PC-9 (cell line): ENCODE measurements at regions of chr5 and their contacts with region 1.

Region 1: GRCh38 chr5:20300110-20300509 is 312.1 kb upstream of the CDH18 start:
- DNase-seq: no peak
- H3K4me3 ChIP-seq: no peak overlapping the region
- H3K27ac ChIP-seq: no peak overlapping the region
- H3K4me1 ChIP-seq: no peaks in the 10 kb centered on the region
- H3K27me3 ChIP-seq: no peaks in the 10 kb centered on the region
- CTCF ChIP-seq: no peak

Region 2: GRCh38 chr5:18975624-18976023 is 1324.5 kb before region 1 on chr5:
- CTCF ChIA-PET with region 1: no interaction called
- POLR2A ChIA-PET with region 1: no interaction called
- intact Hi-C with region 1: no loop called
- DNase-seq: peak in 1 of 2 experiments; percentile 25
- H3K4me3 ChIP-seq: no peak overlapping the region
- H3K27ac ChIP-seq: no peak overlapping the region
- H3K4me1 ChIP-seq: no peaks in the 10 kb centered on the region
- H3K27me3 ChIP-seq: no peaks in the 10 kb centered on the region
- CTCF ChIP-seq: no peak

Region 3: GRCh38 chr5:20335980-20336379 is 35.9 kb after region 1 on chr5:
- CTCF ChIA-PET with region 1: no interaction called
- POLR2A ChIA-PET with region 1: no interaction called
- intact Hi-C with region 1: loop called (anchors 1 kb)
- DNase-seq: peak in 1 of 2 experiments; percentile 14
- H3K4me3 ChIP-seq: no peak overlapping the region
- H3K27ac ChIP-seq: no peak overlapping the region
- H3K4me1 ChIP-seq: no peaks in the 10 kb centered on the region
- H3K27me3 ChIP-seq: no peaks in the 10 kb centered on the region
- CTCF ChIP-seq: peak; percentile 40; the same call in 1 of the 2 replicates